Psoas muscle (tissue), 8 donors: ENCODE measurements at regions of chr16 and their contacts with region 1.

Region 1: GRCh38 chr16:3536271-3536731 is 35.5 kb downstream of the CLUAP1 start:
- DNase-seq: no peak
- ATAC-seq: no peak
- H3K4me3 ChIP-seq: no peak overlapping the region
- H3K27ac ChIP-seq: no peak overlapping the region
- H3K4me1 ChIP-seq: peaks cover 27% of the 10 kb centered on the region
- H3K27me3 ChIP-seq: no peaks in the 10 kb centered on the region
- CTCF ChIP-seq: no peak

Region 2: DNA sequence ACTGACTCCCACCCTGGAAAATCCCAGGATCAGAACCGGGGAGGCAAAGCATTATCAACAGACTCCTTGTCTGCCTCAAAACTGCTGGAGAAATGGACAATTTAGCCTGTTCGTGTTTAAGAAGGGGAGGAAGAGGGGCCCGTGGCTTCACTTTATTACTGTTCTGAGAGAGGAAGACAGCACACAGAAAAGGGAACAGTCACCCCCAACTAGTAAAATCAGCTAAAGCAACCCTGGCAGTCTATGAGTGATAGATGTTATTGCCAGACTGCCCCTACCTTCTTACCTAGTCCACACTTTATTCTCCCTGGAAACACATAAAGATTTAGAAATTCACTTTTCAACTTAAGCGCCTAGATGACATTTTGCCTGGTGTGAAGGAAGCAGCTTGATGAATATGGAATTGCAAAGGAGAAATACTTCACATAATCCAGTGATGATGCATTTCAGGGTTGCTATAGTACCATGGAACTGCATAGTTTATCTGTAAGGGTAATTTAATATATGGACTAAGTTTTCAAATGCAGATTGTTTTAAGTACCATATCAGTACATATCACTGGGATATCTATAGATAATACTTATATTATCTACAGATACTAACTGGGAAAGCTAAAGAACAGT is 217.9 kb after region 1 on chr16:
- intact Hi-C with region 1: loop called in 1 of 2 experiments (anchors 10 kb)
- DNase-seq: no peak
- ATAC-seq: peak in 3 of 4 donors; percentile 36 to 59 (median 44)
- H3K4me3 ChIP-seq: no peak overlapping the region
- H3K27ac ChIP-seq: no peak overlapping the region
- H3K4me1 ChIP-seq: peaks cover 27% of the 10 kb centered on the region
- H3K27me3 ChIP-seq: no peaks in the 10 kb centered on the region
- CTCF ChIP-seq: no peak